CD4-positive, alpha-beta memory T cell (primary cell): ENCODE measurements at regions of chr20 and their contacts with region 1.

Region 1: GRCh38 chr20:3092611-3093379 is 8.3 kb upstream of the AVP start:
- DNase-seq: peak; percentile 26 to 54 (median 40)
- H3K4me3 ChIP-seq: no peak overlapping the region
- H3K4me3 Mint-ChIP-seq: peak overlapping the region; percentile 86 to 93 (median 91)
- H3K27ac ChIP-seq: peak overlapping the region; percentile 39
- H3K27ac Mint-ChIP-seq: peak overlapping the region; percentile 88 to 98 (median 94)
- H3K4me1 ChIP-seq: peaks cover 16% of the 10 kb centered on the region
- H3K4me1 Mint-ChIP-seq: peaks cover 9 to 26% (median 12%) of the 10 kb centered on the region in 4 donors
- H3K27me3 ChIP-seq: peaks cover 6% of the 10 kb centered on the region
- H3K27me3 Mint-ChIP-seq: peaks cover 4 to 21% of the 10 kb centered on the region in 2 donors

Region 2: GRCh38 chr20:3068986-3069900 is 23.6 kb before region 1 on chr20:
- CTCF ChIA-PET with region 1: interaction called, 4 read pairs
- POLR2A ChIA-PET with region 1: interaction called, 22 read pairs
- intact Hi-C with region 1: loop called (anchors 2 kb)
- DNase-seq: peak in 4 of 5 donors; percentile 19 to 37 (median 27)
- H3K4me3 ChIP-seq: no peak overlapping the region
- H3K4me3 Mint-ChIP-seq: peak overlapping the region in 1 of 8 donors; percentile 43
- H3K27ac ChIP-seq: no peak overlapping the region
- H3K27ac Mint-ChIP-seq: peak overlapping the region in 1 of 7 donors; percentile 72
- H3K4me1 ChIP-seq: peaks cover 18% of the 10 kb centered on the region
- H3K4me1 Mint-ChIP-seq: peaks cover 16 to 20% (median 17%) of the 10 kb centered on the region in 4 donors
- H3K27me3 ChIP-seq: no peaks in the 10 kb centered on the region
- H3K27me3 Mint-ChIP-seq: no peaks in the 10 kb centered on the region